GM13976 (cell line): ENCODE measurements at regions of chr11 and their contacts with region 1.

Region 1: GRCh38 chr11:74226907-74227306 is 55.8 kb downstream of the PPME1 start:
- DNase-seq: no peak
- CTCF ChIP-seq: no peak

Region 2: GRCh38 chr11:73578592-73579185 is 648.2 kb before region 1 on chr11:
- in situ Hi-C with region 1: no loop called
- DNase-seq: no peak
- CTCF ChIP-seq: no peak

Region 3: GRCh38 chr11:73950869-73951710 is 275.8 kb before region 1 on chr11 and contains the start of gene DNAJB13:
- in situ Hi-C with region 1: loop called (anchors 25 kb)
- DNase-seq: peak; percentile 81
- CTCF ChIP-seq: no peak

Region 4: DNA sequence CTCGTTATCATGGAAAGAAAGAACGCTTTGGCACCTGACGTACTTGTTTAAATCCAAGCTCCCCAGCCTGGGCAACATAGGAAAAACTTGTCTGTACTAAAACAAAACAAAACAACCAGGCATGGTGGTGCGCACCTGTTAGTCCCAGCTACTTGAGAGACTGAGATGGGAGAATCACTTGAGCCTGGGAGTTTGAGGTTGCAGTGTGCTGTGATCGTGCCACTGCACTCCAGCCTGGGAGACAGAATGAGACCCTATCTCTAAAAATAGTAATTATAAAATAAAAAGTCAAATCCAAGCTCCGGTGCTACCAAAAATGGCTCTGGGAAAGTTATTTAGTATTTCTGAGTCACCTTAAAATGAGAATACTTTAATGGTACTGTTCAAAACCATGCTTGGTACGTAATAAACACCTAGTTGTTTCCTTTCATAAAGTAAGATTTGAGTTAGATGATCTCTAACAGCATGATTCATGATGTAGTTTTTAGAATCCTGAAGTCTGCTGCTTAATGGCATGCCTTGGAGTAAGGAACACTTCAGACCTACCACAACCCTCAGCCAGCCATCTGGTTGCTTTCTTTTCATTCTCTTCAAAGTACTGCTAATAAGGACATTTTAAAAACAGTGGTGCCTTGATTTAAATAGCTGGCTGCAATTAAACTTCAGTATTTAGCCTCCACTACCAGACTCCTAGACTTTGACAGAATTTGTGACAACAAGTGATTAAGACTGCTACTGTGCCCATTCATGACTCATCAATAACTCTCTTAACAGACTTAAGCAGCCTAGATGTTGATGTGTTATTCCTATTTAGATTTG is 47.5 kb before region 1 on chr11:
- in situ Hi-C with region 1: no loop called
- DNase-seq: no peak
- CTCF ChIP-seq: no peak

Region 5: GRCh38 chr11:74400606-74401005 is 173.7 kb after region 1 on chr11:
- in situ Hi-C with region 1: no loop called
- DNase-seq: no peak
- CTCF ChIP-seq: no peak